Right cardiac atrium (tissue), 5 donors: ENCODE measurements at regions of chr6 and their contacts with region 1.

Region 1: DNA sequence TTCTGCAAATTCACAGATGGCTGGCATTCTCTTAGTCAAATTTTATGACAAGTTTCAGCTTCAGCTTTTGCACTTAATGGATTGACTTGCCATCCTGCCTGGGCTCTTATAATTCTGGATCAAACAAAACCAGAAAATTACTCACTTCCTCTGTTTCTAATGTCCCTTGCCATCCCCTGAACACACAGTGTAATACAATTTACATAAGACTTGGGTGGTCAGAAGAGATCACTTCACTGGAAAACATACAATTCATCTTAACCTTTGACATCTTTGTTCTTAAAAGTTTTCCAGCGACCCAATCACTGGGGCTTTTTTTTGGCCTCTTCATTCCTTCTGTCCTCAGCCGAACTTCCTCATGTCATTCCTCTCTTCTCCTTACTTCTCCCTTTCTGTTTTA is 199.0 kb downstream of the ARHGAP18 start:
- DNase-seq: no peak
- ATAC-seq: no peak
- H3K4me3 ChIP-seq: no peak overlapping the region
- H3K27ac ChIP-seq: no peak overlapping the region
- H3K4me1 ChIP-seq: no peaks in the 10 kb centered on the region
- H3K27me3 ChIP-seq: no peaks in the 10 kb centered on the region

Region 2: DNA sequence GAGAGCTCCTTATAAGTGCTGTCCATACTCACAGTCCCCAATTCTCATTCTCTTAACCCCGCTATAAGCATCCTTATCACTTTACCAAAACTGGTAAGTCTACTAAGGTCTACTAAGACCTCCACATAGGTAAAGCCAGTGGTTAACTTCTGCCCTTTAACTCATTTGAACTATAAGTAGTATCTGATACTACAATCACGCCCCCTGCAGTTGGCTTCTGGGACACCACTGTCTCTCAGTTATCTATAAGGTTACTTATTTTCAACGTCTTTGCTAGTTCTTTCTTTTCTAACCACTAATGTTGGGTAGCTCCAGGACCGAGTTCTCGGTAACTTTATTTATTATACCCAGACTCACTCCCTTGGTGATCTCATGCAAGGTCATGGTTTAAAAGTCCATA is 56.4 kb after region 1 on chr6:
- intact Hi-C with region 1: loop called in 1 of 4 experiments (anchors 10 kb)
- DNase-seq: peak in 1 of 3 donors; percentile 52
- ATAC-seq: no peak
- H3K4me3 ChIP-seq: no peak overlapping the region
- H3K27ac ChIP-seq: no peak overlapping the region
- H3K4me1 ChIP-seq: no peaks in the 10 kb centered on the region
- H3K27me3 ChIP-seq: no peaks in the 10 kb centered on the region